ENCODE measurements at regions of chr12 and their contacts with region 1.

Region 1: GRCh38 chr12:6285063-6285477 is 25.4 kb upstream of the PLEKHG6 start:
- DNase-seq: peak; percentile 68
- H3K4me3 Mint-ChIP-seq: no peak overlapping the region
- H3K27ac Mint-ChIP-seq: no peak overlapping the region
- H3K4me1 Mint-ChIP-seq: peaks cover 2% of the 10 kb centered on the region
- H3K27me3 Mint-ChIP-seq: peaks cover 6% of the 10 kb centered on the region

Region 2: GRCh38 chr12:5988659-5989116 is 296.4 kb before region 1 on chr12:
- CTCF ChIA-PET with region 1: interaction called, 10 read pairs
- POLR2A ChIA-PET with region 1: no interaction called
- DNase-seq: peak; percentile 73
- H3K4me3 Mint-ChIP-seq: no peak overlapping the region
- H3K27ac Mint-ChIP-seq: no peak overlapping the region
- H3K4me1 Mint-ChIP-seq: no peaks in the 10 kb centered on the region
- H3K27me3 Mint-ChIP-seq: peaks cover 2% of the 10 kb centered on the region

Region 3: GRCh38 chr12:6195665-6196535 is 89.2 kb before region 1 on chr12:
- CTCF ChIA-PET with region 1: interaction called, 18 read pairs
- POLR2A ChIA-PET with region 1: no interaction called
- DNase-seq: peak; percentile 78
- H3K4me3 Mint-ChIP-seq: no peak overlapping the region
- H3K27ac Mint-ChIP-seq: no peak overlapping the region
- H3K4me1 Mint-ChIP-seq: peaks cover 13% of the 10 kb centered on the region
- H3K27me3 Mint-ChIP-seq: peaks cover 32% of the 10 kb centered on the region

Measured in activated CD4-positive, alpha-beta T cell treated with anti-CD3 and anti-CD28 coated beads, Interleukin-2, amount 10 ng/mL, durations not matched to agents 7 days and 5 days (primary cell).